Cardiac septum (tissue), 1 donor: ENCODE measurements at regions of chr11 and their contacts with region 1.

Region 1: DNA sequence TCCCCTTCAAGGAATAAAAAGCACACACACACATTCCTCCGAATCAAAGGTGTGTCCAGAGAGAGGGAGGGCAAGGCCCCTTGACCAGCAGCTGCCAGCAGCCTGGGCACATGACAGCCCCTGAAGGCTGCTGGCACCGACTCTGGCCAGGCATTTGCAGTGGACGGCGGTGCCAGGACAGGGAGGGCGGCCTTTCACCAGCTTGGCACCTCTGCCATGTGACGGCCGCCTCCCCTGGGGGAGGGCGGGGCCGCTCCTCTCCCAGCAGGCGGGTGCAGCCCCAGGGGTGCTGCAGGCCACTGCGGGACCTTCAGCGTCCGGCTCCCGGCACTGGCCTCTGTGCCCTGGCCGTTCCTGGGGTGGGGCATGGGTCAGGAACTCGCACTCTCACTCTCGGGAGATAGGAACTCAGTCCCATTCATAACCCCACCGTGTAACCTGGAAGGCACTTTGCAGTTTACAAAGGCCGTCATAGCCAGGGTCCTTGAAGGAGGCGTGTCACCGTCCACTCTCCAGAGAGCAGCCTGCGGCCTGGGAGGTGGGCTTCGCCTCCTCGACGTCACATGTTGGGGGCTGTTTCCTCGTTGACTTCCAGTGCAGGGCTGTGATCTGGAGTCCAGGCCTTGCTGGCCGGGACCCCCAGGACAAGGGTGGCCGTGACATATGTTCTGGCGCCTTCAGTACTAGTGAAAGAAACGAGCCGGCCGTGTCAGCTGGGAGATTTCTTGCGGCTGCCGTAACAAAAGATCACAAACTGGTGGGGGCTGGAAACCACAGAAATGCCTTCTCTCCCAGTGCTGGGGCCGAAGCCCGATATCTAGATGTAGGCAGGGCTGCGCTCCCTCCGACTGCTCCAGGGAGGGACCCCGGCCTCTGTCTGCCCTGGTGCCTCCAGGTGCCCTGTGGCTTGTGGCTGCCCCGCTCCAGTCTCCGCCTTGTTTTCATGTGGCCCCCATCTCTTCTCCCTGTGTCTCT is 39.9 kb upstream of the SMIM38 start:
- DNase-seq: peak; percentile 86

Region 2: GRCh38 chr11:69166218-69167115 is 50.6 kb after region 1 on chr11:
- intact Hi-C with region 1: loop called (anchors 2 kb)
- DNase-seq: no peak

Region 3: GRCh38 chr11:69229511-69229910 is 113.6 kb after region 1 on chr11:
- intact Hi-C with region 1: no loop called
- DNase-seq: peak; percentile 69

Region 4: GRCh38 chr11:69240332-69241074 is 124.6 kb after region 1 on chr11:
- intact Hi-C with region 1: loop called (anchors 10 kb)
- DNase-seq: peak; percentile 58